Heart right ventricle (tissue), 16 donors: ENCODE measurements at regions of chr5 and their contacts with region 1.

Region 1: GRCh38 chr5:1152156-1152555 is 40.3 kb upstream of the SLC12A7 start:
- DNase-seq: peak in 1 of 2 donors; percentile 6
- ATAC-seq: no peak
- H3K4me3 ChIP-seq: no peak overlapping the region
- H3K27ac ChIP-seq: no peak overlapping the region
- H3K4me1 ChIP-seq: peaks cover 0 to 5% (median 3%) of the 10 kb centered on the region in 9 donors
- H3K27me3 ChIP-seq: peaks cover 9 to 41% (median 29%) of the 10 kb centered on the region in 7 donors
- CTCF ChIP-seq: no peak

Region 2: DNA sequence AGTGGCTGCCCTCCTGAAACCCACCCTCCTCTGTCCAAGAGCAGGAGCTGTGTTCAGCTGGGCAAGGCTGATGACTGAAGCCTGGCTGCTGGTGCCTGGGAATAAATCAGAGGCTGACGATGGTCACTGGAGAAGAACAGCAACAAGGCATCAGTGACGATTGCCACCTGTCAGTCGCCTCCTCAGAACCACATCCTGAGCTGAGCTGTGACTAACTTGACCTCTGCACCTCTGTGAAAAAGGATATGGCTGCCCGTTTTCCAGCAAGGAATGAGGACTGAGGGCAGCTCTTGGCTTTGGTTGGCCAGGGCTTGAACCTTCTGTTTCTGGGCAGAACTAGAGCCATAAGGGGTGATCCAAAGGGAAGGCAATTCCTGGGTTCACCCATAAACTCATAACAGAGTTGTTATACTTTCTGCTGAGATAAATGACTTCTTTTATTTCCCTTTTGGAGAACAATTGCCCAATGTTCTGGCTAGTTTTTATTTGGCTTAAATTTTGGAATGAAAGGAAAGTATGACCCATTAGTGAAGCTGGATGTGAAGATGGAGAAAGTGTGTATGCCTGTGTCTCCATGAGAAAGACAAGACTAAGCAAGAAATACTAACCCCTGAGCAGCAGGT is 219.4 kb before region 1 on chr5:
- intact Hi-C with region 1: loop called in 2 of 10 experiments (anchors 10 kb)
- DNase-seq: no peak
- ATAC-seq: peak in 6 of 8 donors; percentile 30 to 66 (median 54)
- H3K4me3 ChIP-seq: no peak overlapping the region
- H3K27ac ChIP-seq: peak overlapping the region in 9 of 10 donors; percentile 1 to 51 (median 22)
- H3K4me1 ChIP-seq: peaks cover 0 to 7% (median 0%) of the 10 kb centered on the region in 9 donors
- H3K27me3 ChIP-seq: peaks cover 0 to 9% (median 5%) of the 10 kb centered on the region in 7 donors
- CTCF ChIP-seq: no peak

Region 3: GRCh38 chr5:1111727-1112289 is 40.3 kb before region 1 on chr5 and contains the start of gene SLC12A7:
- intact Hi-C with region 1: loop called in 1 of 10 experiments (anchors 1 kb)
- DNase-seq: peak in 1 of 2 donors; percentile 74
- ATAC-seq: peak in 7 of 8 donors; percentile 18 to 81 (median 35)
- H3K4me3 ChIP-seq: peak within 1 kb of the TSS; percentile 74 to 99 (median 97)
- H3K27ac ChIP-seq: peak within 1 kb of the TSS; percentile 91 to 99 (median 97)
- H3K4me1 ChIP-seq: peaks cover 7 to 45% (median 41%) of the 10 kb centered on the region in 9 donors
- H3K27me3 ChIP-seq: peaks cover 0 to 3% (median 0%) of the 10 kb centered on the region in 7 donors
- CTCF ChIP-seq: no peak
- total RNA-seq, gene SLC12A7: 122 to 208 (median 146) TPM